Activated T-helper 1 cell treated with anti-CD3 and anti-CD28 coated beads, Interleukin-12 subunit alpha, Interleukin-12 subunit beta, Interleukin-2, Interleukin-4 antibody, amounts not matched to agents 30 ng/mL and 10 ng/mL and 1 ng/mL, durations not matched to agents 14 hours and 24 hours and 36 hours (primary cell): ENCODE measurements at regions of chr19 and their contacts with region 1.

Region 1: GRCh38 chr19:41144403-41144802 is 30.2 kb downstream of the CYP2F1 start:
- DNase-seq: peak; percentile 80
- H3K4me3 Mint-ChIP-seq: no peak overlapping the region
- H3K27ac Mint-ChIP-seq: no peak overlapping the region
- H3K4me1 Mint-ChIP-seq: no peaks in the 10 kb centered on the region
- H3K27me3 Mint-ChIP-seq: peaks cover 18% of the 10 kb centered on the region

Region 2: DNA sequence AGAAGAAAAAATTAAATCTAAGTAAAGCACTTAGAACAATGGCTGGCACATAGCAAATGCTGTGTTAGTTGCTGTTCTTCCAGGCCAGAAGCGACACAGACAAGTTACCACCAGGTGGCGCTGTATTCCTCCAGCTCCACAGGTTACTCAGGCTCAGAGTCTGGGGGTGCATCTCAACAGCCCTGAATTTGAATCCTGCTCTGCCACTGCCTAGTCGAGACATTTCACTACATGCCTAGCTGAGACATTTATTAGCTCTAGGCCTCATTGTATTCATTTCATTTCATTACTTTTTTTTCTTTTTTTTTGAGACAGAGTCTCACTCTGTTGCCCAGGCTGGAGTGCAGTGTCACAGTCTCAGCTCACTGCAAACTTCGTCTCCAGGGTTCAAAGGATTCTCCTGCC is 169.8 kb before region 1 on chr19:
- intact Hi-C with region 1: loop called (anchors 1 kb)
- DNase-seq: peak; percentile 62
- H3K4me3 Mint-ChIP-seq: peak overlapping the region; percentile 24
- H3K27ac Mint-ChIP-seq: no peak overlapping the region
- H3K4me1 Mint-ChIP-seq: peaks cover 48% of the 10 kb centered on the region
- H3K27me3 Mint-ChIP-seq: peaks cover 4% of the 10 kb centered on the region

Region 3: DNA sequence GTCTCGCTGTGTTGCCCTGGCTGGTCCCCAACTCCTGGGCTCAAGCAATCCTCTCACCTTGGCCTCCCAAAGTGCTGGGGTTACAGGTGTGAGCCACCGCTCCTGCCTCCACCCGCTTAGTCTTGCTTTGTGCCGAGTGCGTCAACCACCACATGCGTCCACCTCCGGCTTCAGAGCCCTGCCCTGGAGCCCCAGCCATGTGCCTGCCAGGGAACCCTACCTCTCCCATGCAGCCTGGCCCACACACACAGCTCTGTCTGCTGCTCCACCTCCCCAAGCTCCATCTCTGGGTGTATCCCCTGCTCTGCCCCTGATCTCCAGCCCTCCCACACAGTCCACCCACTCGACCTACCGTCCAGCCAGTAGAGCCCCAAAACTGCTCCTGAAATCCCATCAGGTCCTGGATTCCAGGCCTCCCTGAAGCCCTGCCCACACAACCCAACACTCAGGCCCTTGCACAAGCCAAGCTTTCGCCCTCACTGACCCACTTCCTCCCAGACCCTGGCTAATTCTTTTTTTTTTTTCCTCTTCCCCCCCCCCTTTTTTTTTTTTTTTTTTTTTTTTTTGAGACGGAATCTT is 20.6 kb before region 1 on chr19:
- intact Hi-C with region 1: loop called (anchors 1 kb)
- DNase-seq: no peak
- H3K4me3 Mint-ChIP-seq: no peak overlapping the region
- H3K27ac Mint-ChIP-seq: no peak overlapping the region
- H3K4me1 Mint-ChIP-seq: peaks cover 29% of the 10 kb centered on the region
- H3K27me3 Mint-ChIP-seq: peaks cover 15% of the 10 kb centered on the region

Region 4: GRCh38 chr19:41288673-41289505 is 144.5 kb after region 1 on chr19:
- intact Hi-C with region 1: no loop called
- DNase-seq: no peak
- H3K4me3 Mint-ChIP-seq: no peak overlapping the region
- H3K27ac Mint-ChIP-seq: no peak overlapping the region
- H3K4me1 Mint-ChIP-seq: no peaks in the 10 kb centered on the region
- H3K27me3 Mint-ChIP-seq: no peaks in the 10 kb centered on the region